ENCODE measurements at regions of chr13 and their contacts with region 1.

Region 1: GRCh38 chr13:48769107-48769704 is 115.5 kb downstream of the CYSLTR2 start:
- DNase-seq: peak; percentile 87
- H3K4me3 ChIP-seq: no peak overlapping the region
- H3K27ac ChIP-seq: no peak overlapping the region
- H3K4me1 ChIP-seq: no peaks in the 10 kb centered on the region
- H3K27me3 ChIP-seq: no peaks in the 10 kb centered on the region
- CTCF ChIP-seq: peak; percentile 98 to 100 (median 100)
- EP300 ChIP-seq: no peak
- POLR2A ChIP-seq: no peak

Region 2: DNA sequence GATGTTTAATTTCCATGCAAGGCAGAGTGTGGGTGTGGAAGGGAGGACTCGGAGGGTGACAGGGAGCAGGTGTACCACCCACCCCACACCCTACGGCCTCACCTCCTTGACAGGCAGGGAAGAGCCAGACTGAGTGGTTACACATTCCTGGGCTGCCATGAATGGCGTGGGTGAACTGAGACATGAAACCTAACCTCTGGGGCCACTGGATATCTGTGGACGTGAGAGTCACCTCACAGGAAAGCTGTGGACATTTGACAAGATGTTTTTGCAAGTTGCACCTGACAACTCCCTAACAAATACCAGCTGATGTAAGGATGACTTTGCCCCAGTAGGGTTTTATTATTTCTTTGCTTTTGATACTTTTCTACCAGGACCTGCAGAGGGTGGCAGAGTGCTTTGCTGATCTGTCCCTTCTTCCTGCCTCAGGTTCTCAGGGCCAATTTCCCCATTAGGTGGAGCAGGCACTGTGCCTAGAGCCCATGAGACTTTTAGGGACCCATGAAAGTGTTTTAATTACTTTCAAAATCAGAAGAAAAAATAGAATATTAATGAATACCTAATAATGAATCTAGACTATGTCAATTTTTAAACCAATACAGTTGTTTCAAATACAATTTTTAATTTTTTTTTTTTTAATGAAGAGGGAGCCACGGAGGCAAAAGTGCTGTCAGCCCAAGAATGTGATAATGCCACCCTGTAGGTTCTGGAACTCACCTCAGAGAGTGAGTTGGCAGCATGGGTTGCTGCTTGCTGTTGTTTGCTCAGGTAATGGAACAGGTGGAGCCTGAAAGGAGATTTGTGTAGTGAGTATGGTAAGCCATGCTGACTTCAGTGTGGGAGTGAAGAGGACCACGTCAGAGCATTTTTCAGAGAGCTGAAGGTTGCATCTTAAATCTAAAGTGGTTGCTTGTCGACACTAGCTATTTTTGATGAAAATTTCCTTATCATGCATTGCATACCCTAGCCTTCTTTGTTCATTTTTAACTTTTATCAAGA is 173.5 kb before region 1 on chr13:
- intact Hi-C with region 1: loop called (anchors 5 kb)
- DNase-seq: peak; percentile 72
- H3K4me3 ChIP-seq: no peak overlapping the region
- H3K27ac ChIP-seq: no peak overlapping the region
- H3K4me1 ChIP-seq: no peaks in the 10 kb centered on the region
- H3K27me3 ChIP-seq: no peaks in the 10 kb centered on the region
- CTCF ChIP-seq: peak in 2 of 4 experiments; percentile 43 to 63
- EP300 ChIP-seq: no peak
- POLR2A ChIP-seq: no peak

Region 3: DNA sequence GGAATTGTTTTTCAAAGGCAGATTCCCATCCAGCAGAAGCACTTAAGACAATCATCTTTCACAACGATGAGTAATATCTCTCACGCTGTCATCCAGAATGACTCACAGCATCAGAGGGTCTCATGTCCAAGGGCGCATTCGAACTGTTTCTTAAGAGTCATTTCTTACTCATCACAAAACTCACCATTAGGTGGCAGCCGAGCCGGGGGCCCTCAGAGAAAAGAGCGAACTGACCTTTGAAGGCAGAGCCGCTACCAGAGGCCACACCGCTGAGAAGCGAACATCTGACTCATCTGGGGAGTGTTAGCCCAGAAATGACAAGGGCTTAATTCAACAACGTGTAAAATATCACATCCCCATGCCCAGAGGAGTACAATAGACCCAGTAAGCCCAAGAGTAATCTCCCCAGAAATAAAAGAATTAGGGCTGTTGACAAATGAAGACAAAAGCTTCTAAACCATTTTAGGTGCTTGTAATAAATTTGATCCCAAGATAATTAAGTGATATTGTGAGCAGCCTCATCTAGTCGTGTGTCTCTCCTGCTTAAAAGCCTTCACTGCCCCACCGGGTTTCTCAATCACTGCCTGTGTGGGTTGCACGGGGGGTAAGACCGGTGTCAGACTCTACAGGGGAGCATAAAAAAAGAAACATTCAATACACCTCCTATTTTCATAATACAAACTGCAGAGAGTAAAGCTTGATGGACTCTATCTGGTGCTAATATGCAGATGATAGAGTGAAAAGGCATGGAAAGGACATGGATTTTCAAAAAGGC is 19.3 kb before region 1 on chr13:
- intact Hi-C with region 1: loop called (anchors 1 kb)
- DNase-seq: peak; percentile 94
- H3K4me3 ChIP-seq: no peak overlapping the region
- H3K27ac ChIP-seq: peak overlapping the region; percentile 74 to 83 (median 80)
- H3K4me1 ChIP-seq: peaks cover 0 to 30% (median 23%) of the 10 kb centered on the region in 4 donors
- H3K27me3 ChIP-seq: no peaks in the 10 kb centered on the region
- CTCF ChIP-seq: peak; percentile 18 to 53 (median 46)
- EP300 ChIP-seq: peak in 1 of 4 donors; percentile 40
- POLR2A ChIP-seq: no peak

Region 4: GRCh38 chr13:48975856-48976575 is 206.8 kb after region 1 on chr13 and contains the start of gene FNDC3A:
- intact Hi-C with region 1: no loop called
- DNase-seq: peak; percentile 90
- H3K4me3 ChIP-seq: peak within 1 kb of the TSS; percentile 80 to 95 (median 92)
- H3K27ac ChIP-seq: peak within 1 kb of the TSS; percentile 99 to 100 (median 99)
- H3K4me1 ChIP-seq: peaks cover 0 to 45% (median 38%) of the 10 kb centered on the region in 4 donors
- H3K27me3 ChIP-seq: no peaks in the 10 kb centered on the region
- CTCF ChIP-seq: no peak
- EP300 ChIP-seq: no peak
- POLR2A ChIP-seq: no peak
- total RNA-seq, gene FNDC3A: 47.8 to 61.4 (median 54.3) TPM

Region 5: DNA sequence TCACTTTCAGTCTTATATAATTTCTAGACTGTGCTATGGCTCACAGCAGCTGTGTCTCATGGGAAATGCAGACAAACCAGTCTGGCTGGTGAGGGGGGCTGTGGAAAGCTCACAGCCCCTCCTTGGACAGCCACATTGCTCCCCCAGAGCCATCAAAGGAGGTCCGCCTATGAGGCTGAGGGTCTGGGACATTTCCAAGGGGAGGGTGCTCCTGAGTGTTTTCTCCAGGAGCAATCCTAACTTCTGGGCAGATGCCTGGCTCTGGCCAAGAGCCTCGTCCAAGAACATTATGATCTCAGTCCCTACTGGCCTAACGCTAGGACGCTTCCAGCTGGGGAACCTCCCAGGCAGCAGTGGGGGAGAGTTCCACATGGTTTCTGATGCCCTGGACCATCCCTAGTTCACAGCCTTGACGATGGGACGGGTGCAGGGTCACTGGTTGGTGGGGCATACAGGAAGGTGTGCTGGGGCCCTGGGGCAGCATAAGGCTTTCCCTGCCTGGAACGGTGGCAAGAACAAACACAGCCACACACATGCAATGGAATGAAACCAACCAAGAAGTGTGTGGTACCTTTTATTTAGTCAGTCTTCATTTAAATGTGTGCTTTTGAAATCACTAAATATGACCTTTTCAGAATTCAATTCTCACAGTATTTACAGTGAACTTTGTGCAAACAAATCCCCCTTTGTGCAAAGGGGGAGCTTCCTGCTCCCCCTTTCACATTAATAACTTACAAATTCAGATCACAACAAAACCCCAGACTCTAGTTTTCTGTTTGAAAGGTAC is 539.1 kb after region 1 on chr13:
- intact Hi-C with region 1: no loop called
- DNase-seq: peak; percentile 98
- H3K4me3 ChIP-seq: no peak overlapping the region
- H3K27ac ChIP-seq: peak overlapping the region; percentile 82 to 89 (median 84)
- H3K4me1 ChIP-seq: peaks cover 0 to 76% (median 63%) of the 10 kb centered on the region in 4 donors
- H3K27me3 ChIP-seq: no peaks in the 10 kb centered on the region
- CTCF ChIP-seq: no peak
- EP300 ChIP-seq: peak; percentile 57 to 90 (median 75)
- POLR2A ChIP-seq: no peak

Measured in sigmoid colon (tissue), 7 donors.